GM12878 (cell line): ENCODE measurements at regions of chr9 and their contacts with region 1.

Region 1: DNA sequence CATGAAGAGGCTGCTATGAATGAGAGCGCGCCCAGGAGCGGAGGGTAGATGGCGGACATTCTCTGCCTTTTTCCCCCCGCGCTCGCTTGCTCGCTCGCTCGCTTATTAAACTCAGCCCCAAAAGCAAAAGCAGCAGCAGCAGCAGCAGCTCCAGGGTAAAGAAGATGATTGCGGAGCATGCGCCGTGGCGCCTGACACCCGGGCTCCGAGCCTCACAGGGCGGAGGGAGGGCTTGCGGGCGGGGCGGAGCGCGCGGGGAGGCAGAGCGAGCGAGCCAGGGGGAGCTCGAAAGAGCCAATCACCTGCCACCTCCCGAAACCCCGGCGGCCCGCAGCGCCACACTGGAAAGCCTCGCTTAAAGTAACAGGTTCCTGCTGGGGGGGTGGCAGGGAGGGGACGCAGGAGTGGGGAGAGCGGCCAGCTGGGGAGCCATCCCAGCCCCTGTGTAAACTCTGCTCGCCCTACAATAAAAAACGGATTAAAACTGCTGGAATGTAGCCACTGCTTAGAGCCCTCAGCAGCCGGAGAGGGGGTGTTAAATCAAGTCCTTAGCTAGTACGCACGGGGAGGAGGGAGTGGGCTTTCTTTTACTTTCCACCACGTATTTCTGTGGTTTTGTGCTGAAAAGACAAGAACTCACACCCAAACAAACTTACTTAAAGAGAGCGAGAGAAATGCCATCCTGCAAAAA is at the start of gene MLLT3:
- DNase-seq: peak; percentile 87
- ATAC-seq: peak; percentile 85
- H3K4me3 ChIP-seq: peak within 1 kb of the TSS; percentile 87
- H3K27ac ChIP-seq: peak within 1 kb of the TSS; percentile 80
- H3K4me1 ChIP-seq: no peaks in the 10 kb centered on the region
- H3K27me3 ChIP-seq: no peaks in the 10 kb centered on the region
- CTCF ChIP-seq: peak in 1 of 3 experiments; percentile 13; a peak in 1 of 6 replicates
- EP300 ChIP-seq: no peak
- POLR2A ChIP-seq: peak; percentile 68
- RAD21 ChIP-seq: peak; percentile 10; the same call in 1 of the 2 replicates
- polyA plus RNA-seq, gene MLLT3: 32.9 to 37.9 TPM

Region 2: DNA sequence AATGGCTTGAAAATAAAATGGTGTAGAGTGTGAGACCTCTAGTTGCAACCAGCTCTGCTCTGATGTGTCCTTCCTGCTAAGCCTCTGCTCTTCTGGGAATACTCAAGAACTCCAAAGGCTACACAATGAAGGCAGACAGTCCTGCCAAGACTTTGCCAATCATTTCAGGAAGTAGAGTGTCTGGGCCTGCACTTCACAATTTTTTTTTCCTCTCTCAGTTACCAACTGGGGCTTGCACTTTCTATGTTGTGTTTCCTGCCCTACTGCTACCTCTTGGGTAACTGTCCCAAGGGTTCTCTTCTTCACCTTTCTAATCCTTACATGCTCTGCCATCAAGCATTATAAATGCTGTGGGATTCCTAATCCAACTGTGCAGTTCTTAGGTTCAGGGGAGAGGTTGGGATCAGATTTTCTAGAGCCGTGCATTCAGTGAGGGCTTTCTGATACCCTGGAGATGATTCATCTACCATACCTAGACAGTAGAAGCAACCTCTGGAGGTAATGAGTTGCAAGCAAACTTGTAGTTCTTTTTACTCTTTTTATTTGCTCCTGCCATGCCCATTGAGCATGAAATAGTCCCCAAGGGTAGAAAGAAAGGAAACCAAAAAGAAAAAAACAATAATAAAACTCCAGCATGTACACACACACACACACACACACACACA is 366.1 kb before region 1 on chr9:
- CTCF ChIA-PET with region 1: no interaction called
- POLR2A ChIA-PET with region 1: no interaction called
- RAD21 ChIA-PET with region 1: no interaction called
- SMC1A ChIA-PET with region 1: no interaction called
- in situ Hi-C with region 1: no loop called
- intact Hi-C with region 1: no loop called
- DNase-seq: no peak
- ATAC-seq: no peak
- H3K4me3 ChIP-seq: no peak overlapping the region
- H3K27ac ChIP-seq: no peak overlapping the region
- H3K4me1 ChIP-seq: no peaks in the 10 kb centered on the region
- H3K27me3 ChIP-seq: no peaks in the 10 kb centered on the region; a peak in 1 of 4 replicates
- CTCF ChIP-seq: no peak
- EP300 ChIP-seq: no peak
- POLR2A ChIP-seq: no peak
- RAD21 ChIP-seq: no peak

Region 3: GRCh38 chr9:20426019-20426418 is 196.5 kb before region 1 on chr9:
- CTCF ChIA-PET with region 1: interaction called, 7 read pairs
- POLR2A ChIA-PET with region 1: interaction called, 3 read pairs
- RAD21 ChIA-PET with region 1: interaction called, 8 read pairs
- SMC1A ChIA-PET with region 1: interaction called, 6 read pairs
- in situ Hi-C with region 1: no loop called
- intact Hi-C with region 1: loop called (anchors 2 kb)
- DNase-seq: no peak
- ATAC-seq: peak; percentile 70
- H3K4me3 ChIP-seq: no peak overlapping the region; the same call in 1 of the 2 replicates
- H3K27ac ChIP-seq: no peak overlapping the region; the same call in 1 of the 2 replicates
- H3K4me1 ChIP-seq: peaks cover 14% of the 10 kb centered on the region; the same call in 1 of the 2 replicates
- H3K27me3 ChIP-seq: no peaks in the 10 kb centered on the region
- CTCF ChIP-seq: no peak
- EP300 ChIP-seq: no peak
- POLR2A ChIP-seq: no peak
- RAD21 ChIP-seq: no peak

Region 4: GRCh38 chr9:20558566-20559016 is 63.9 kb before region 1 on chr9:
- CTCF ChIA-PET with region 1: interaction called, 32 read pairs
- POLR2A ChIA-PET with region 1: interaction called, 9 read pairs
- RAD21 ChIA-PET with region 1: interaction called, 41 read pairs
- SMC1A ChIA-PET with region 1: interaction called, 52 read pairs
- in situ Hi-C with region 1: no loop called
- intact Hi-C with region 1: loop called (anchors 2 kb)
- DNase-seq: no peak
- ATAC-seq: peak; percentile 64
- H3K4me3 ChIP-seq: no peak overlapping the region
- H3K27ac ChIP-seq: peak overlapping the region; percentile 36; the same call in 1 of the 2 replicates
- H3K4me1 ChIP-seq: peaks cover 31% of the 10 kb centered on the region
- H3K27me3 ChIP-seq: no peaks in the 10 kb centered on the region
- CTCF ChIP-seq: no peak
- EP300 ChIP-seq: no peak
- POLR2A ChIP-seq: no peak
- RAD21 ChIP-seq: no peak

Region 5: DNA sequence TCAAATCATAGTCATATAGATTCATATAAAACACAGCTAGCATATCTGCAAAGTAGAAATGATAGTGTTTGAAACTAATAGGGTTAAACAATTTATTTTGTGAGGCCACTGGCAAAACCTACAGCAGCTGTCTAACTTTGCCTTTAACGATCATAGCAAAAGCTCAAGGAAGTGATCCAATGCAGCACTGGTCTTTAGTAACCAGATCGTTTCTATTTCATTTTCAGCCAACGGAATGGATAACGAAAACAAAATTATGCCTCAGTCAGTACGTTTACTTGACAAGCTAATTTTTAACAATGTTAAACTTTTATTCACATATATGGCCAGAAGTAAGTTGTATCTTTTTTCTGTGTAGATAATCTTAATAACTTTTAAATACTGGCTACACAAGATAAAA is 17.9 kb before region 1 on chr9:
- CTCF ChIA-PET with region 1: interaction called, 25 read pairs
- POLR2A ChIA-PET with region 1: interaction called, 25 read pairs
- RAD21 ChIA-PET with region 1: interaction called, 55 read pairs
- SMC1A ChIA-PET with region 1: interaction called, 68 read pairs
- in situ Hi-C with region 1: no loop called
- intact Hi-C with region 1: no loop called
- DNase-seq: no peak
- ATAC-seq: peak; percentile 85
- H3K4me3 ChIP-seq: peak overlapping the region; percentile 45
- H3K27ac ChIP-seq: peak overlapping the region; percentile 67
- H3K4me1 ChIP-seq: peaks cover 19% of the 10 kb centered on the region
- H3K27me3 ChIP-seq: no peaks in the 10 kb centered on the region
- CTCF ChIP-seq: no peak
- EP300 ChIP-seq: no peak; a peak in 1 of 4 replicates
- POLR2A ChIP-seq: no peak
- RAD21 ChIP-seq: no peak

Region 6: GRCh38 chr9:20658677-20659473 is 36.4 kb after region 1 on chr9:
- CTCF ChIA-PET with region 1: interaction called, 16 read pairs
- POLR2A ChIA-PET with region 1: interaction called, 28 read pairs
- RAD21 ChIA-PET with region 1: interaction called, 41 read pairs
- SMC1A ChIA-PET with region 1: interaction called, 47 read pairs
- in situ Hi-C with region 1: no loop called
- intact Hi-C with region 1: loop called (anchors 1 kb)
- DNase-seq: no peak
- ATAC-seq: peak; percentile 56
- H3K4me3 ChIP-seq: peak overlapping the region; percentile 76
- H3K27ac ChIP-seq: peak overlapping the region; percentile 88
- H3K4me1 ChIP-seq: no peaks in the 10 kb centered on the region
- H3K27me3 ChIP-seq: no peaks in the 10 kb centered on the region
- CTCF ChIP-seq: no peak
- EP300 ChIP-seq: no peak
- POLR2A ChIP-seq: no peak
- RAD21 ChIP-seq: no peak

Region 7: GRCh38 chr9:20732118-20732517 is 109.6 kb after region 1 on chr9:
- CTCF ChIA-PET with region 1: interaction called, 3 read pairs
- POLR2A ChIA-PET with region 1: interaction called, 5 read pairs
- RAD21 ChIA-PET with region 1: interaction called, 3 read pairs
- SMC1A ChIA-PET with region 1: interaction called, 24 read pairs
- in situ Hi-C with region 1: no loop called
- intact Hi-C with region 1: loop called (anchors 5 kb)
- DNase-seq: no peak
- ATAC-seq: no peak
- H3K4me3 ChIP-seq: no peak overlapping the region
- H3K27ac ChIP-seq: no peak overlapping the region
- H3K4me1 ChIP-seq: no peaks in the 10 kb centered on the region
- H3K27me3 ChIP-seq: no peaks in the 10 kb centered on the region
- CTCF ChIP-seq: no peak
- EP300 ChIP-seq: no peak
- POLR2A ChIP-seq: no peak
- RAD21 ChIP-seq: no peak

Region 8: DNA sequence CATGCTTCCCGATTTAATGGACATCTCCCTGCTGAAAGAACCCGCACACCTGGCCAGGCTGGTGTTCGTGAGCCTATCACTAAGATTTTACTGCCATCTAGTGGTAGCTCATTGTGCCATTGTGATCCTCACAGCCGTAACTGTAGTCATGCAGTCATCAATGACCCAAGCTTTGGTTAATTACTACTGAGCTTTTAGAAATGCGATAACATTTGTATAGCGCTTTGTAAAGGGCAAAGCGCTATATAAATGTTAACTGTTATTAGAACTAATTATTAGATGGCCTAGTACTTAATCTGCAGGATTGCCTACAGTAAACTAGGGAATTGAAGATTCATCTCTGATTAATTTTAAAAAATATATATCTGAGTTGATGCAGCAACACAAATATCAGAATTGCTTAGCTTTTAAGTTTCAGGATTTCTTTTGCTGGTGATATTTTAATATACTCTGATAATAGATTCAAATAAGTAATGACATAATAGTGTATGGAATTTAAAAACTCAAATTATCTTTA is 318.8 kb after region 1 on chr9:
- CTCF ChIA-PET with region 1: interaction called, 70 read pairs
- POLR2A ChIA-PET with region 1: interaction called, 8 read pairs
- RAD21 ChIA-PET with region 1: interaction called, 104 read pairs
- SMC1A ChIA-PET with region 1: interaction called, 80 read pairs
- in situ Hi-C with region 1: loop called (anchors 5 kb)
- intact Hi-C with region 1: loop called (anchors 1 kb)
- DNase-seq: peak; percentile 54
- ATAC-seq: peak; percentile 100
- H3K4me3 ChIP-seq: no peak overlapping the region
- H3K27ac ChIP-seq: no peak overlapping the region
- H3K4me1 ChIP-seq: no peaks in the 10 kb centered on the region
- H3K27me3 ChIP-seq: no peaks in the 10 kb centered on the region
- CTCF ChIP-seq: peak; percentile 77 to 84 (median 84)
- EP300 ChIP-seq: no peak
- POLR2A ChIP-seq: no peak
- RAD21 ChIP-seq: peak; percentile 93

Region 9: DNA sequence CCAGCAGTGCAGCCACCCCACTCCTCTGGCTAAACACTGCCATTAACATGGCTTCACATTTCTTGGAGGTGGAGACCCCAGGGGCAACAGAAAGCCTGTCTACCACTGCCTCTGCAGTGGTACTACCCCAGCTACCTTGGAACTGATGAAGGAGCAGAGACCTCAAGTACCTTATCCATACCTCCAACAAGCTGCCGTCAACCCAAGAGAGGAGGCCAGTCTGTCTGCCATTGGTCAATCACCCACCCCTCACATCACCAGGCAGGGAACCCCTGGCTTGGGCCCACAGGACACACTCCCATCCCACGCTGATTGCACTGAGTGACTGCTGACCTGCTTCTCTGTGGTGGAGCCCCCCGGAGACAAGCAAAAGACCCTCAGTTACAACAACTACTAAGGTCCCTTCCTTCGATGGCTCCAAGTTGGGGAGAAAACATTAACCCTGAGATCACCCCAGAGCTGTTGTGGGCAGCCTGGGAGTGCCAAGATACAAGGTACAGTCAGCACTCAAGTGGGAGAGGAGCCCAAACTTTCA is 611.7 kb after region 1 on chr9:
- CTCF ChIA-PET with region 1: no interaction called
- POLR2A ChIA-PET with region 1: no interaction called
- RAD21 ChIA-PET with region 1: no interaction called
- SMC1A ChIA-PET with region 1: no interaction called
- in situ Hi-C with region 1: no loop called
- intact Hi-C with region 1: no loop called
- DNase-seq: no peak
- ATAC-seq: no peak
- H3K4me3 ChIP-seq: no peak overlapping the region
- H3K27ac ChIP-seq: no peak overlapping the region
- H3K4me1 ChIP-seq: no peaks in the 10 kb centered on the region
- H3K27me3 ChIP-seq: no peaks in the 10 kb centered on the region
- CTCF ChIP-seq: no peak
- EP300 ChIP-seq: no peak
- POLR2A ChIP-seq: no peak
- RAD21 ChIP-seq: no peak